ENCODE measurements at regions of chr1 and their contacts with region 1.

Region 1: DNA sequence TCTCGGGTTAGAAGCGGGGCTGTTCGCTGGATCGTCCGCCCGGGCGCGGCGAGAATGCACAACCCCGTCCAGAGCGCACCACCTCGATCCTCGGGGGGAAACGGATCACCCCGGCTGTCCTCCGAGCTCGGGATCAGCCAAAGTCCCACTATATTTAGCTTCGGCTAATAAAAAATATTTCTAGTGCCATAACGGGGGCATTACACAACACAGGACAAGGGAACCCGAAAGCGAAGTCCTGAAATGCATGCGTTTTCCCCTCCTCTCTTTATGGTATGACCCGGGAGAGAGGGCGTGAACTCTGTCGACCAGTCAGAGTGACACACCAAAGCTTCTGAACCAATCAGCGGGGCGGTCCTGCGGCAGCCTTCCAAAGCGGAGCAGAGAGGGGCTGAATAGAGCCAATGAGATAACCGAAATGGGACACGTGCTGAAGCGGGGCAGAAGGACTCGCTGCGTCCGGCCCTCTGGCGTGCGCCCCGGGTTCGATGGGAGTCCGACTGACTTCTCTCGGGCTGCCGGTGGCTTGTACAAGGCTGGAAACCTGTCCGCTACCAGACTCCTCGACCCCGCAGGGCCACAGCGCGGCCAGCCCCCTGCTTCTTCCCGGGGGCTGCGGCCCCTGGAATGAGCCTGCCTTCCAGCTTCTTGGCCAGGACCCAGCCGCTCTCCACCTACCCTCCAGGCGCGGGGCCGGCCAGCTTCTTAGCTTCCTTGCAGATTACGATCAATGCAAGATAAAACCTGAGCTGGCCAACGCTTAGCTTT is at the start of gene ALDH4A1:
- DNase-seq: peak; percentile 91 to 99 (median 98)
- ATAC-seq: peak; percentile 95 to 97 (median 96)
- H3K4me3 ChIP-seq: peak within 1 kb of the TSS; percentile 45 to 93 (median 78)
- H3K27ac ChIP-seq: peak within 1 kb of the TSS; percentile 56 to 86 (median 79)
- H3K4me1 ChIP-seq: peaks cover 5 to 13% (median 7%) of the 10 kb centered on the region in 3 donors
- H3K27me3 ChIP-seq: no peaks in the 10 kb centered on the region
- CTCF ChIP-seq: no peak
- total RNA-seq, gene ALDH4A1: 1.4 to 5.9 (median 3.5) TPM

Region 2: DNA sequence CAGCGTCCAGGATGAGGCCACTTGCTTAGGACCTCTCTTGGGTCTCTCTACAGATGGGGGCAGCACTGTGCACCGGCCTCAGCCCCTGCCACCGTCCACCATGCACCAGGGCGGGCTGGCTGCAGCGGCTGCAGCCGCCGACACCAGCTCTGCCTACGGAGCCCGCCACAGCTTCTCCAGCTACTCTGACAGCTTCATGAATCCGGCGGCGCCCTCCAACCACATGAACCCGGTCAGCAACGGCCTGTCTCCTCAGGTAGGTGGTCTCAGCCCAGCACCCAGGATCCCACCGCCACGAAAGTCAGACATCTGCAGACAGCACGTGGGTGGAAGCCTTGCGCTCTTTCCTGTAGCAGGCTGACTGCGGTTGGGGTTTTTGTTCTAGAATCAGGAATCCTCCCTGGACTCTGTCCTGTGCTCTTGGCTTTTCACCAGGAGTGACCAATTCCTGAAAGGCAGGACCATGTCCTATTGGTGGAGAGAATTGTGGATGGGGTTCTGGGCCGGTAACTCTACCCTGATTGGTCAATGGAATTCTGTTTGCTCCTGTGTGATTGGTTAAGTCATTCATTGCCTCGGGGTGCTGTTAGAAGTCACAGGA is 199.6 kb before region 1 on chr1:
- intact Hi-C with region 1: no loop called
- DNase-seq: no peak
- ATAC-seq: no peak
- H3K4me3 ChIP-seq: no peak overlapping the region
- H3K27ac ChIP-seq: no peak overlapping the region
- H3K4me1 ChIP-seq: no peaks in the 10 kb centered on the region
- H3K27me3 ChIP-seq: peaks cover 0 to 7% (median 0%) of the 10 kb centered on the region in 4 donors
- CTCF ChIP-seq: no peak

Region 3: DNA sequence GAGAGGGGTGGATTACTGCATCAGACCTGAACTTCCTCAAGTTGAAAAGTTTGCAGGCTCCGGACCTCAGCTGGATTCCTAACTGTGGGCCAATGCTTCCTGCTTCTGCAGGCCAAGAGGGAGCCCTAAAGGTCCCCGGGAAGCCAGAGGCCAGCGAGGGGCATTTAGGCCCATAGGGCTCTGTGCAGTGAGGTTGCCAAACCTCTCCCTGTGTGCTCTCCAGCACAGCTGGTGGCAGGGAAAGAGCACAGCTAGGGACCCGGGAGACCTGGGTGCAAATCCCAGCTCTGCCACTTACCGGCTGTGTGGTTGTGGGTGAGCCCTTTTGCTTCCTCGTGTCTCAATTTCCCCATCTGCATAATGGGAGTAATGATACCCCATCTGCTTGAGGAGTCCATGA is 171.6 kb before region 1 on chr1:
- intact Hi-C with region 1: no loop called
- DNase-seq: no peak
- ATAC-seq: no peak
- H3K4me3 ChIP-seq: no peak overlapping the region
- H3K27ac ChIP-seq: no peak overlapping the region
- H3K4me1 ChIP-seq: no peaks in the 10 kb centered on the region
- H3K27me3 ChIP-seq: no peaks in the 10 kb centered on the region
- CTCF ChIP-seq: no peak

Region 4: DNA sequence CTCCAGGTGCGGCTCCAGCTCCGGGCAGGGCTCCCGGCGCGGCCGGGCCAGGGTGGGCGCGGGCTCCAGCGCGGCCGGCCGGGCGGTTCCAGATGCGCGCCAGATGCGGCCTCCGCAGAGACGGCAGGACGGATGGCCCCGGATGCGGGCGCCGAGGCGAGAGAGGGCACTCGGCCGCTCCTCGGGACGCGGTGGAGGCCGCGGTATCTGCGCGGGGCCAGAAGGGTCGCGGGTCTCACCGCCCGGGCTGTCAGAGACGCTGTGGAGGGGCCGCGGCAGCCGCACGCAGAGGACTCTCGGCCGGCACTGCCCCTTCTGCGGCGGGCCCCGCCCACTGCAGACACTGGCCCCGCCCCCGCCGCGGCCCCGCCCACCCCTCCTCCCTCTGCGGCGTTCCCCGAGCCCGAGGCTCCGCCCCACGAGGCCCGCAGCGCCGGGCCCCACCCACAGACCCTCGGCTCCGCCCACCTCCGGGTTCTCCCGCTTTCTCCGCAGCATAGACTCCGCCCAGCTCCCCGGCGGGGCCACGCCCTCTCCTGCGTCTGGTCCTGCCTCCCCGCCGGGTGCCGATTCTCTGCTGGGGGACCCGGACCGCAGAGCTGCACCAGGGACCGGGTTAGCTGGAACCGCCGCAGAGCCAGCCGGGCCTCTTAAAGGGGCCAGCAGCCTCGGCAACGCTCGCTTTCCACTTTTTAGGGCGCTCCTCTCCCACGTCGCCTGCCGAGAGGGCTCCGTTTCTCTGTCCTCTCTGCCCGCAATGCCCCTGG is 53.8 kb after region 1 on chr1 and contains the start of gene IFFO2:
- intact Hi-C with region 1: loop called in 1 of 3 experiments (anchors 10 kb)
- DNase-seq: peak; percentile 96 to 100 (median 99)
- ATAC-seq: peak; percentile 89 to 95 (median 92)
- H3K4me3 ChIP-seq: peak within 1 kb of the TSS; percentile 56 to 91 (median 82)
- H3K27ac ChIP-seq: peak within 1 kb of the TSS; percentile 65 to 78 (median 72)
- H3K4me1 ChIP-seq: peaks cover 4 to 22% (median 7%) of the 10 kb centered on the region in 3 donors
- H3K27me3 ChIP-seq: no peaks in the 10 kb centered on the region
- CTCF ChIP-seq: no peak
- total RNA-seq, gene IFFO2: 23.0 to 38.4 (median 26.4) TPM

Region 5: DNA sequence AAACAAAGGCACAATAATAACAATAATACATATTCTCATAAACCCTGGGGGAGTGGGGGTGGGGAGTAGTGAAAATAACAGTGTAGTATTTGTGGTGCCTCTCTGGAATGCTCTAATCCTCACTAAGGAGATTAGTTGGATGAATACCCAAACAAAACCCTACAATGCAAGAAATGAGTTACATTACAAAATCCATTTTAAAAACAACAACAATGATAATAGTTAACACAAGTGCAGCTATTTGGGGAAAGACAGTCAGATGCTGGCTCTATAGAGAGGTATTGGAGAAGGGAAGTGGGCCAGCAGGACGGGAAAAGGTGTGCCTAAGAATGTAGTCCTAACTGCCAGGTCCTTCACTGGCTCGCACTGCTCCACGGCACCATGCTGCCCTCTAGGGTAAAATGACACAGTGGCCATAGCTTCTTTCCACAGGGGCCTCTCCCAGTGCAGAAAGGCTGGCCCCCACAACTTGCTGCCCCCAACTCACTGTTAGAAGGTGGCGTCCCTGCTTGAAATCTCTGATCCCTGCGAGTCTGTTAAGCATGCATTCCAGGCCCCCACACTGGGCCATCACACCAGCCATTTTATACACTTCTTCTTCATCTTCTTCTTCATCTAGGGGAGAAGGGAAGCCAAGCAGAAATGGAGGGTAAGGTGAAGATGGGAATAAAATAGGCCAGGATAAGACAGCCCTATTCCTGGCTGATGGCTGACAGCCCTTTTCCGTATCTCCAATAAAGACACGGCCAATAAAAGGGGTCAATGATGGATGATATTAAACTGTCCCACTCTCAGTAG is 193.5 kb after region 1 on chr1:
- intact Hi-C with region 1: loop called in 1 of 3 experiments (anchors 5 kb)
- DNase-seq: peak in 5 of 6 donors; percentile 50 to 73 (median 56)
- ATAC-seq: peak; percentile 67 to 95 (median 90)
- H3K4me3 ChIP-seq: no peak overlapping the region
- H3K27ac ChIP-seq: no peak overlapping the region
- H3K4me1 ChIP-seq: peaks cover 0 to 10% (median 8%) of the 10 kb centered on the region in 3 donors
- H3K27me3 ChIP-seq: no peaks in the 10 kb centered on the region
- CTCF ChIP-seq: peak; percentile 6 to 57 (median 41)

Region 6: GRCh38 chr1:19123837-19124236 is 221.1 kb after region 1 on chr1:
- intact Hi-C with region 1: no loop called
- DNase-seq: no peak
- ATAC-seq: no peak
- H3K4me3 ChIP-seq: no peak overlapping the region
- H3K27ac ChIP-seq: no peak overlapping the region
- H3K4me1 ChIP-seq: no peaks in the 10 kb centered on the region
- H3K27me3 ChIP-seq: no peaks in the 10 kb centered on the region
- CTCF ChIP-seq: no peak